CD8-positive, alpha-beta T cell (primary cell): ENCODE measurements at regions of chr16 and their contacts with region 1.

Region 1: DNA sequence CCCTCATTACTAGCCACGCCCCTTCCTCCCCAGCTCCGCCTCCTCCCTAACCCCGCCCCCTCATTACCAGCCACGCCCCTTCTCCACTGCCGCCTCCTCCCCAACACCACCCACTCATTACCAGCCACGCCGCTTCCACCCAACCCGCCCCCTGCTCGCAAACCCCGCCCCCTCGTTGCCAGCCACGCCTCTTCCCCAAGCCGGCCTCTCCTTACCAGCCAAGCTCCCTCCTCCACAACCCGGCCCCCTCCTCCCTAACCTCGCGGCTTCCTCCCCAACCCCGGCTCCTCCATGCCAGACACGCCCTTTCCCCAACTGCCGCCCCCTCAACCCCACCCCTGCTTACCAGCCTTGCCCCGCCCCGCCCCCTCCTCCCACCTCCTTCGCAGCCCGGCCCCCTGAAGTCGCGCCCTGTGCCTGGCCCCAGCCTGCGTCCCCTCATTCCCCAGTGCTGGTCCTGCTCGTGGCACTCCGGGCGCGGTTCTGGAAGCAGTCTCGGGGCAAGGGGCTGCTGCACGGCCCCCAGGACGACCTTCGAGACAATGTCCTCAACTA is 7.2 kb downstream of the SLC22A31 start:
- DNase-seq: peak in 3 of 9 experiments; percentile 62 to 76 (median 64)
- ATAC-seq: no peak
- H3K4me3 ChIP-seq: no peak overlapping the region
- H3K4me3 Mint-ChIP-seq: no peak overlapping the region
- H3K27ac ChIP-seq: no peak overlapping the region
- H3K27ac Mint-ChIP-seq: no peak overlapping the region
- H3K4me1 ChIP-seq: no peaks in the 10 kb centered on the region
- H3K4me1 Mint-ChIP-seq: peaks cover 4% of the 10 kb centered on the region
- H3K27me3 ChIP-seq: no peaks in the 10 kb centered on the region
- H3K27me3 Mint-ChIP-seq: no peaks in the 10 kb centered on the region
- CTCF ChIP-seq: no peak

Region 2: DNA sequence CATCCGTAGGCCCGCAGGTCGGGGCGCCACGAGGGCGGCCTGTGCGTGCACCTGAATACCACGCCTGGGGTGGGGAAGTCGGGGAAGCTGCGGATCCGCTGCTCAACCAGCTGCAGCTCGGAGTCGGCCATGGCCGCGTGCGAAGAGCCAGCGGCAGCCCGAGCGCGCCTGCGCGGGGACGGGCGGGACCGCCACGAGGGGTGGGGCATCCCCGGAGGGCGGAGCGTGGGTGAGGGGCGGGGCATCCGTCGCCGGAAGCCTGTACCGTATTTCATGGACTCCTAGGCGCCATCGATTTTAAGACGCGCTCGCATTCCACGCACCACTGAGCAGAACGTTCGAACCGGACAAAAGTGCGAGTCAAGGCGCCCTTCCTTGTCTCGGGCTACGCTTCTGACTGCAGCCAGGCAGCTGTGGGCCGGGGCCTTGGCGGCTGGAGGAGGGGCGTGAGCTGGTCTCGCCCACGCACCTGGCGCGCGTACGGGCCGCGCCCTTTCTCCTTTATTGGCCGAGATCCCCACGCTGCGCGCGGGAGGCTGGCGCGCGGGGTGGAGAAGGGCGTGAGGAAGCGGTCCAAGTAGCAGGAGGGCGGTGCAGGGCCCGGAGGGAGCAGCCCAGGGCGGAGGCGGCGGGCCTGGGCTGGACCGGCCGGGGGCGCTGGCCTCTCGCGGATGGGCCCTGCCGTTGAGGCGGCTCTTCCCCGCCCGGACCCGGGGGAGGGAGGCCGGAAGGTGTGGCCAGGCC is 381.2 kb before region 1 on chr16 and contains the start of gene APRT:
- CTCF ChIA-PET with region 1: no interaction called
- POLR2A ChIA-PET with region 1: no interaction called
- intact Hi-C with region 1: loop called in 1 of 2 experiments (anchors 1 kb)
- DNase-seq: peak; percentile 93 to 99 (median 97)
- ATAC-seq: peak; percentile 90
- H3K4me3 ChIP-seq: peak within 1 kb of the TSS; percentile 75 to 99
- H3K4me3 Mint-ChIP-seq: peak within 1 kb of the TSS; percentile 97
- H3K27ac ChIP-seq: peak within 1 kb of the TSS; percentile 71 to 87
- H3K27ac Mint-ChIP-seq: peak within 1 kb of the TSS; percentile 97
- H3K4me1 ChIP-seq: peaks cover 21% of the 10 kb centered on the region
- H3K4me1 Mint-ChIP-seq: peaks cover 19% of the 10 kb centered on the region
- H3K27me3 ChIP-seq: no peaks in the 10 kb centered on the region
- H3K27me3 Mint-ChIP-seq: no peaks in the 10 kb centered on the region
- CTCF ChIP-seq: no peak
- total RNA-seq, gene APRT: 171 to 178 TPM

Region 3: GRCh38 chr16:88826070-88826840 is 366.8 kb before region 1 on chr16:
- CTCF ChIA-PET with region 1: no interaction called
- POLR2A ChIA-PET with region 1: no interaction called
- intact Hi-C with region 1: no loop called
- DNase-seq: no peak
- ATAC-seq: no peak
- H3K4me3 ChIP-seq: no peak overlapping the region
- H3K4me3 Mint-ChIP-seq: no peak overlapping the region
- H3K27ac ChIP-seq: no peak overlapping the region
- H3K27ac Mint-ChIP-seq: no peak overlapping the region
- H3K4me1 ChIP-seq: no peaks in the 10 kb centered on the region
- H3K4me1 Mint-ChIP-seq: no peaks in the 10 kb centered on the region
- H3K27me3 ChIP-seq: no peaks in the 10 kb centered on the region
- H3K27me3 Mint-ChIP-seq: no peaks in the 10 kb centered on the region
- CTCF ChIP-seq: no peak

Region 4: DNA sequence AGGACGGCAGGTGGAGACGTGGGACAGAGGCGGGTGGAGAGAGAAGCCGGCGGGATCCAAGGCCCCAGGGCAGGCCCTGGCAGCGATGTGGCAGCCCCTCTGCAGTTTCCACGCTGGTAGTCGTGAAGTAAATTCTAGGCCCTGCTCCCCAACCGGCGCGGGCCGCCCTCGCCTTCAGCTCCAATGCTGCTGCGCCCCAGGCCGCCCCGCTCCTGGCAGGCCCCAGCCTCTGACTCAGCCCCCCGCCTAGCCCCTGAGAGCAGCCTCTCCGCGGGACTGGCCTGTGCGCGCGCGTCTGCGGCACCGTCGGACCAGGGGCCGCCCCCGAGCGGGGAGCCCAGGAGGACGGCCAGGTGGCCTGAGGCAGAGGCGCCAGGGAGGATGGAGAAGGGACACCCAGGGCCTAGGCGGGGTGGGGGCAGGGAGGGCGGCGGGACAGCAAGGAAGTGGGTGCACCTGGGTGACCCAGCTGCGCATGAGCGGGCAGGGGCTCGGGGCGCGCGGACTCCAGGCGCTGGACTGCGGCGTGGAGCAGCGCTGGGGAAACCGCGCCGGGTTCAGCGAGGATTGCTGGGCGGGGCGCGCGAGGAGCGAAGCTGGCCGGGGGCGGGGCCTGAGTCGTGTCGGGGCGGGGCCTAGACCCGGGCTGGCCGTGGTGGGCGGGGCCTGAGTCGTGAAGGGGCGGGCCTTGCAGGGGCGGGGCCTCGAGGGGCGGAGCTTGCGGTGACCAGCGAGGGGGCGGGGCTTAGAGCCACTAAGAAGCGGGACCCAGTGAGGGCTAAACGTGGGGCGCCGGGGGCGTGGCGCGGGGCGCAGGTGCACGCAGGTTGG is 54.0 kb after region 1 on chr16:
- CTCF ChIA-PET with region 1: no interaction called
- POLR2A ChIA-PET with region 1: no interaction called
- intact Hi-C with region 1: loop called (anchors 2 kb)
- DNase-seq: peak; percentile 91 to 99 (median 97)
- ATAC-seq: peak; percentile 96
- H3K4me3 ChIP-seq: peak overlapping the region; percentile 29 to 37
- H3K4me3 Mint-ChIP-seq: peak overlapping the region; percentile 75
- H3K27ac ChIP-seq: no peak overlapping the region
- H3K27ac Mint-ChIP-seq: peak overlapping the region; percentile 62
- H3K4me1 ChIP-seq: peaks cover 17% of the 10 kb centered on the region
- H3K4me1 Mint-ChIP-seq: peaks cover 19% of the 10 kb centered on the region
- H3K27me3 ChIP-seq: no peaks in the 10 kb centered on the region
- H3K27me3 Mint-ChIP-seq: no peaks in the 10 kb centered on the region
- CTCF ChIP-seq: no peak

Region 5: GRCh38 chr16:90046971-90047713 is 854.0 kb after region 1 on chr16:
- CTCF ChIA-PET with region 1: no interaction called
- POLR2A ChIA-PET with region 1: no interaction called
- intact Hi-C with region 1: loop called in 1 of 2 experiments (anchors 5 kb)
- DNase-seq: peak in 2 of 9 experiments; percentile 18 to 39
- ATAC-seq: peak; percentile 25
- H3K4me3 ChIP-seq: peak overlapping the region; percentile 12 to 15
- H3K4me3 Mint-ChIP-seq: no peak overlapping the region
- H3K27ac ChIP-seq: no peak overlapping the region
- H3K27ac Mint-ChIP-seq: no peak overlapping the region
- H3K4me1 ChIP-seq: peaks cover 10% of the 10 kb centered on the region
- H3K4me1 Mint-ChIP-seq: peaks cover 7% of the 10 kb centered on the region
- H3K27me3 ChIP-seq: peaks cover 0 to 9% of the 10 kb centered on the region in 2 experiments
- H3K27me3 Mint-ChIP-seq: peaks cover 13% of the 10 kb centered on the region
- CTCF ChIP-seq: no peak